ENCODE measurements at regions of chr2 and their contacts with region 1.

Region 1: DNA sequence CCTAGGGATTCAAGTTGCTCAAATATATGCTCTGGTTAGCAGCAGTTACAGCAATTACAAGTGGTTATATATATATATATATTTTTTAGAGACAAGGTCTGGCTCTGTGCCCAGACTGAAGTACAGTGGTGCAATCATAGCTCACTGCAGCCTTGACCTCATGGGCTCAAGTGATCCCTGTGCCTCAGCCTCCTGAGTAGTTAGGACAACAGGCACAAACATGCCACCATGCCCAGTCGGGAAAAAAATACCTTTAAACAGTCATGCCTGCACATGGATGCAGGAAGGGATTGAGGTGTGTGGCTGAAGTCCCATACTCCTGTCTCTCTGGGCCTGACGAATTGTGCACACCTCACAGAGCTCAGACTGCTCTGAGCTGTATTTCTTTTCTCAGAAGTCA is 19.6 kb upstream of the DNAH7 start:
- DNase-seq: no peak
- H3K4me3 ChIP-seq: no peak overlapping the region
- H3K27ac ChIP-seq: no peak overlapping the region
- H3K4me1 ChIP-seq: no peaks in the 10 kb centered on the region
- H3K27me3 ChIP-seq: no peaks in the 10 kb centered on the region
- CTCF ChIP-seq: no peak

Region 2: GRCh38 chr2:196123679-196124373 is 35.6 kb after region 1 on chr2:
- intact Hi-C with region 1: no loop called
- DNase-seq: no peak
- H3K4me3 ChIP-seq: no peak overlapping the region
- H3K27ac ChIP-seq: peak overlapping the region in 1 of 2 donors; percentile 11
- H3K4me1 ChIP-seq: peaks cover 0 to 10% (median 0%) of the 10 kb centered on the region in 4 donors
- H3K27me3 ChIP-seq: no peaks in the 10 kb centered on the region
- CTCF ChIP-seq: no peak

Region 3: GRCh38 chr2:196289000-196289399 is 200.8 kb after region 1 on chr2:
- intact Hi-C with region 1: loop called (anchors 10 kb)
- DNase-seq: no peak
- H3K4me3 ChIP-seq: no peak overlapping the region
- H3K27ac ChIP-seq: no peak overlapping the region
- H3K4me1 ChIP-seq: peaks cover 0 to 19% (median 7%) of the 10 kb centered on the region in 4 donors
- H3K27me3 ChIP-seq: no peaks in the 10 kb centered on the region
- CTCF ChIP-seq: no peak

Region 4: DNA sequence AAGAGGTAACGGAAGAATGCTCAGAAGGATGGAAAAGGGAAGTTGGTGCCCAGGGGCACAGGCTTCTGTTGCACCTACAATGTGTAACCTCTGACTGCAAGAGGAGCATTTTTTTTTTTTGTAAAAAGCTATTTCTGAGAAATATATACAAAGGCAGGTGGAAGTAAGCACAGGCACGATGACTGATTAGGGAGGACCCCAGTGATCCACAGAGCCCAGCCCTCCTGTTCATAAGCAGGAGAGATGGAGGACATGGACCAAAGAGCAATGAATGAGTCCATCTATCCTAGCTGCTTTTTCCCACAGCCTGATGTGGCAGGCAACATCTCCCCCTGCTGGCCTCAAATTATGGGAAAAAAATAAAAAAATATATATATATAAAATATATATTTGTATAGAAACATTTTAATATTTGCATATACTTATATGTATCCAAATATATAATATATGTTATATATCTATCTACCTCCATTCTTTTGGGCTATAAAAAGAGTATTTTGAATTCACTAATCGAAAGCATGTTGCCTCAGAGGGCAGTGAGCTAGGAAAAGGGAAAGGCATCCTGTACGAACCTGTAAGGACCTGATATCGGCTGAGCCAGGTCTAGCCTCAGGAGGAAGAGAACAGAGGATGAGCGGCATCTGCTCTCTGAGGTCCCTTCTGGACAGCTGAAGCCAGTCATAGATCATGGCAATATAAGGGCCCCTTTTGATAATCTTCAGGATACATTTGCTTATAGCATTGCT is 249.2 kb after region 1 on chr2:
- intact Hi-C with region 1: loop called (anchors 10 kb)
- DNase-seq: no peak
- H3K4me3 ChIP-seq: no peak overlapping the region
- H3K27ac ChIP-seq: no peak overlapping the region
- H3K4me1 ChIP-seq: no peaks in the 10 kb centered on the region
- H3K27me3 ChIP-seq: no peaks in the 10 kb centered on the region
- CTCF ChIP-seq: peak; percentile 31 to 40